ENCODE measurements at regions of chr18 and their contacts with region 1.

Region 1: GRCh38 chr18:79378542-79379250 is 17.0 kb upstream of the NFATC1 start:
- DNase-seq: peak; percentile 75
- ATAC-seq: peak; percentile 81
- H3K4me3 Mint-ChIP-seq: no peak overlapping the region
- H3K27ac Mint-ChIP-seq: no peak overlapping the region
- H3K4me1 Mint-ChIP-seq: peaks cover 6% of the 10 kb centered on the region
- H3K27me3 Mint-ChIP-seq: no peaks in the 10 kb centered on the region

Region 2: DNA sequence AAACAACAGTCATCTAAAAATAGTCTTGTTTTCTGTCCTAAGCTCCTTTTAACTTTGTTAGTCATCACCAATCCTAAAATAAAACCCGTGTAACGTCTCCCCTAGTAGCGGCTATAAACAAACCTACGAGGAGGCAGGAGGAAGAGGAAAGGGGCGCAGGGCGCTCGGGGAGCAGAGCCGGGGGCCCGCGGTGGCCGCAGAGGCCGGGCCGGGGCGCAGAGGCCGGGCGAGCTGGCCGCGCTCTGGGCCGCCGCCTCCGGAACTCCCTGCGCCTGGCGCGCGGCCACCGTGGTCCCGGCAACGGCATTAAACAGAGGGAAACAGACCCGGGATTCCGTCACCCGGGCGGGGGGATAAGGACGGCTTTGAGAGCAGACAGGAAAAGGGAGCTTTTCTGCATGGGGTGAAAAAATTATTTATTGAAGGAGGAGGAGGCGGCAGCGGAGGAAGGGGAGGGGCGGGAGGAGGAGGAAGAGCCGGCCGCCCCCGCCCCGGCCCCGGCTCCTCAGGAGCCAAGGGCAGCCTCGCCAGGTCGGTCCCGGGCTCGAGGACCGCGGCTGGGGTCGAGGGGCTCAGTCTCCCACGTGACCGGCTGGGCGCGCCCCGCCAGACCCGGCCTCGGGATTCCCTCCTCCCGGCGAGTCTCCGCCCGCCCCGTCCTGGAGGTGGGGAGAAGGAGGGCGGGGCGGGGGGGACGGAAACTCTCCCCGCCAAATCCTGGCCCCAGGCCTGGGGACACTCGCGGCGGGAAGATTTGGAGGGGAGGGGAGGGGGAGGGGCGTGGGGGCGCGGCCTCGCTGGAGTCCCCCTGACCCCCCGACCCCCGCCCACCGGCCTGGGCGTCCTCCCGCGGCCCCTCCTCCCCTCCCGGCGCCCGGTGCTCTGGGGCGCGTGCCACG is 15.2 kb after region 1 on chr18:
- CTCF ChIA-PET with region 1: interaction called, 34 read pairs
- DNase-seq: no peak
- ATAC-seq: peak; percentile 46
- H3K4me3 Mint-ChIP-seq: peak overlapping the region; percentile 66
- H3K27ac Mint-ChIP-seq: no peak overlapping the region
- H3K4me1 Mint-ChIP-seq: peaks cover 20% of the 10 kb centered on the region
- H3K27me3 Mint-ChIP-seq: peaks cover 50% of the 10 kb centered on the region

Region 3: GRCh38 chr18:79405781-79406575 is 27.3 kb after region 1 on chr18:
- CTCF ChIA-PET with region 1: interaction called, 14 read pairs
- DNase-seq: peak; percentile 95
- ATAC-seq: peak; percentile 91
- H3K4me3 Mint-ChIP-seq: peak overlapping the region; percentile 66
- H3K27ac Mint-ChIP-seq: peak overlapping the region; percentile 93
- H3K4me1 Mint-ChIP-seq: peaks cover 43% of the 10 kb centered on the region
- H3K27me3 Mint-ChIP-seq: no peaks in the 10 kb centered on the region

Region 4: DNA sequence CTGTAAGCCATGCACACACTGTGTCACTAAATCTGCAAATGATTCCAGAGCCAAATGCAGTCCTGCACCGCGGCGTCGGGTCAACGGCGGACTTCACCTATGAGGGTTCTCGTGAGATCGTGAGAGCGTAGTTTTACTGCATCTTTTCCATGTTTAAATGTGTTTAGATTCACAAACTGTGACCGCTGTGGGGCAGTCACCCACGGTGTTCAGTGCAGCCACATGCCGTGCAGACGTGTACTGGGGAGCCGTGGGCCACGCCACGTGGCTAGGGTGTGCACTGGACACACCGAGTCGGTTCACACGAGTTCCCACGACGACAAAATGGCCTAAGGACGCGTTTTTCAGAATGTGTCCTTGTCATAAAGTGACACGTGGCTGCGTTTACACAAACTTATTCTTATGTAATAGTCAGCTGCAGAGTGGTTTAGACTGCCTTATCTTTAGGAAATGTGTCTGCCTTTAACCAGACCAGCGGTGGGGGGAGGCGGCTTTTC is 51.1 kb after region 1 on chr18:
- CTCF ChIA-PET with region 1: no interaction called
- DNase-seq: no peak
- ATAC-seq: no peak
- H3K4me3 Mint-ChIP-seq: no peak overlapping the region
- H3K27ac Mint-ChIP-seq: no peak overlapping the region
- H3K4me1 Mint-ChIP-seq: peaks cover 2% of the 10 kb centered on the region
- H3K27me3 Mint-ChIP-seq: no peaks in the 10 kb centered on the region

Region 5: GRCh38 chr18:79528846-79529245 is 150.2 kb after region 1 on chr18:
- CTCF ChIA-PET with region 1: interaction called, 32 read pairs
- DNase-seq: peak; percentile 77
- ATAC-seq: no peak
- H3K4me3 Mint-ChIP-seq: no peak overlapping the region
- H3K27ac Mint-ChIP-seq: no peak overlapping the region
- H3K4me1 Mint-ChIP-seq: peaks cover 12% of the 10 kb centered on the region
- H3K27me3 Mint-ChIP-seq: peaks cover 3% of the 10 kb centered on the region

Region 6: GRCh38 chr18:79644006-79644665 is 265.4 kb after region 1 on chr18:
- CTCF ChIA-PET with region 1: interaction called, 49 read pairs
- DNase-seq: peak; percentile 76
- ATAC-seq: peak; percentile 90
- H3K4me3 Mint-ChIP-seq: no peak overlapping the region
- H3K27ac Mint-ChIP-seq: no peak overlapping the region
- H3K4me1 Mint-ChIP-seq: peaks cover 3% of the 10 kb centered on the region
- H3K27me3 Mint-ChIP-seq: peaks cover 11% of the 10 kb centered on the region

Measured in activated CD8-positive, alpha-beta memory T cell treated with anti-CD3 and anti-CD28 coated beads, Interleukin-2, amount 10 ng/mL, durations not matched to agents 7 days and 5 days (primary cell).